Mammary epithelial cell (primary cell): ENCODE measurements at regions of chr7 and their contacts with region 1.

Region 1: GRCh38 chr7:47670729-47671128 is 88.8 kb upstream of the TNS3 start:
- DNase-seq: no peak
- H3K4me3 ChIP-seq: no peak overlapping the region
- H3K27ac ChIP-seq: no peak overlapping the region
- H3K4me1 ChIP-seq: peaks cover 6% of the 10 kb centered on the region
- H3K27me3 ChIP-seq: no peaks in the 10 kb centered on the region
- CTCF ChIP-seq: no peak

Region 2: DNA sequence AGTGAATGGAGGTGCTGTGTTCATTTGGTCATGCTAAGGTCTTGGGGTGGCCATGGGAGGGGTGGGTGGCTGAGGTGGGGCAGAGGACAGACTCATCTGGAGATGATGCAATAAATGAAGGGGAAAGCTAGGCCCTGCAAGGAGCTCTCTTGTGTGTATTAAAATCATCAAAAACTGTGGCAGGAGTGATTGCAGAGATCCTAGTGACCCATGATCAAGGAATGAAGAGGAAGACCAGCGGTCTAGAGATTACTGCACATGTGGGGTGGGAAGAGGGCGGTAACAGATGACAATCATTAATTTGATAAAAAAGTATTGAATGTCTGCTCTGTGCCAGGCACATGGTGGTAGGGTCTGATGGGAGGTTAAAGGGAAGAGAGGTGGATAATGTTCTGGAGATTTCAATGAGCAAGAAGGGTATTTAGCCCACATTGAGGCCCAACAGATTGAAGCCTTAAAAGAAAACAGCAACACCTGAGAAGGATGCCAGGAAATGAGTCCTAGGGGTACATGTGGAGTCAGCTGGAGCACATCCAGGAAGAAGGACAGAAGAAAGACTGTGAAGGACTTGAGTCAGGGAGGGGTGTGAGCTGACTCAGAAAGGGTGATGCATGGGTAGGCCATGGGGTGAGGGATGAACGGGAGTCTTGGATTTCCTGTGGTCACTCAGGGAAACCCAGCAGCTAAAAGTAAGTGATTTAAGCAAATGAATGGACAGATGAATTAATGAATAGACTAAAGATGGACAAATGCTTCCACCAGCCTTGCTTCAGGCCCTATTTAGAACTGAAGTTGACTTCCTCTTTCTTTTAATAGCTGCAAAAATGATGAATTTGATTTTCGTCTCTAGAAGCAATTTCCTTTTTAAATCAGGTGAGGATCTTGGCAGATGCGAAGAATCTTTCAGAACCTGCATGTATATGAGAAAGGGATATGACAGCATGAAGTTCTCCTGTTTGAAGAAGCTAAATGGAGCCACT is 1666.5 kb before region 1 on chr7:
- CTCF ChIA-PET with region 1: interaction called, 13 read pairs
- dilution Hi-C with region 1: no loop called
- in situ Hi-C with region 1: no loop called
- intact Hi-C with region 1: no loop called
- DNase-seq: peak; percentile 98
- H3K4me3 ChIP-seq: no peak overlapping the region
- H3K27ac ChIP-seq: peak overlapping the region; percentile 56
- H3K4me1 ChIP-seq: peaks cover 43% of the 10 kb centered on the region
- H3K27me3 ChIP-seq: no peaks in the 10 kb centered on the region
- CTCF ChIP-seq: no peak

Region 3: DNA sequence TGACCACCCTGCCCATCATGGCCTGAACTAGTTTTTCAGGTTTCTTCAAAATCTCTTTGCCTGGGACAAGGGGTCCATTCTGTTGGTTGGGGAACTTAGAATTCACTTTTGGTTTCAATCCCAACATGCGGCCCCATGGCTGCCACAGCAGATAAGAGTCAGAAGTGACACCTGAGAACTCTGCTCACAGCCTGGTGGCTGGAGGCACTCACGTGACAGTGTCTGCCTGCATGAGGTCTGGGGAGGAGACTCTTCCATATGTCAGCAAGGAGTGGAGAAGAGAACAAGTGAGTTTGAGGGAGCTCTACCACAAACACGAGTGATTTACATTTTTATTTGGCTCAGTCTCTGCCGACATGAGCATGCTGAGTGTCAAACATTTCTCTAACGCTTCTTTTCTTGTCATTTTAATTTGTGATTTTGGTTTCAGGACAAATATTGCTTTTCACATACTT is 459.2 kb before region 1 on chr7:
- CTCF ChIA-PET with region 1: no interaction called
- dilution Hi-C with region 1: no loop called
- in situ Hi-C with region 1: no loop called
- intact Hi-C with region 1: no loop called
- DNase-seq: no peak
- H3K4me3 ChIP-seq: no peak overlapping the region
- H3K27ac ChIP-seq: no peak overlapping the region
- H3K4me1 ChIP-seq: no peaks in the 10 kb centered on the region
- H3K27me3 ChIP-seq: peaks cover 2% of the 10 kb centered on the region
- CTCF ChIP-seq: no peak